Activated CD8-positive, alpha-beta T cell treated with anti-CD3 and anti-CD28 coated beads, Interleukin-2, amount 10 ng/mL, durations not matched to agents 7 days and 5 days (primary cell): ENCODE measurements at regions of chr14 and their contacts with region 1.

Region 1: GRCh38 chr14:99230208-99231151 is 41.5 kb downstream of the BCL11B start:
- DNase-seq: peak; percentile 93
- ATAC-seq: peak; percentile 60
- H3K4me3 Mint-ChIP-seq: peak overlapping the region; percentile 75
- H3K27ac Mint-ChIP-seq: peak overlapping the region; percentile 98
- H3K4me1 Mint-ChIP-seq: peaks cover 95% of the 10 kb centered on the region
- H3K27me3 Mint-ChIP-seq: no peaks in the 10 kb centered on the region

Region 2: GRCh38 chr14:99035712-99036610 is 194.5 kb before region 1 on chr14:
- CTCF ChIA-PET with region 1: no interaction called
- POLR2A ChIA-PET with region 1: no interaction called
- DNase-seq: no peak
- ATAC-seq: no peak
- H3K4me3 Mint-ChIP-seq: no peak overlapping the region
- H3K27ac Mint-ChIP-seq: no peak overlapping the region
- H3K4me1 Mint-ChIP-seq: no peaks in the 10 kb centered on the region
- H3K27me3 Mint-ChIP-seq: peaks cover 2% of the 10 kb centered on the region

Region 3: DNA sequence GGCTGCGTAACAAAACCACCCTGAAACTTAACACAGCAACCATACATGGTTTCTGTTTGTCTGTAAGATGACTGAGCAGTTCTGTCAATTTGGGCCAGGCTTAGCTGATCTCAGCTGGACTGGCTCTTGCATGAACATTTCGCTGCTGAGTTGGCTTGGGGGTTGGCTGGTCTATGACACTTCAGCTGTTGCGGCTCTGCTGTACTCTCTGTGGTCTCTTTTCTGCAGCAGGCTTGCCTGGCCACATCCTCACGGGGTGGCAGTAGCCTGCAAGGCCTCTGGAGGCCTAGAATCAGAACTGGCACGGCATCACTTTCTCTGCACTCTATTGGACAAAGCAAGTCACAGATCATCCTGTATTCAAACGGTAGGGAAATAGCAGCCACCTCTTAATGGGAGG is 174.7 kb before region 1 on chr14:
- CTCF ChIA-PET with region 1: no interaction called
- POLR2A ChIA-PET with region 1: no interaction called
- DNase-seq: peak; percentile 93
- ATAC-seq: peak; percentile 99
- H3K4me3 Mint-ChIP-seq: no peak overlapping the region
- H3K27ac Mint-ChIP-seq: peak overlapping the region; percentile 78
- H3K4me1 Mint-ChIP-seq: peaks cover 33% of the 10 kb centered on the region
- H3K27me3 Mint-ChIP-seq: peaks cover 2% of the 10 kb centered on the region

Region 4: GRCh38 chr14:99192028-99192621 is 38.4 kb before region 1 on chr14:
- CTCF ChIA-PET with region 1: interaction called, 20 read pairs
- POLR2A ChIA-PET with region 1: interaction called, 4 read pairs
- DNase-seq: peak; percentile 56
- ATAC-seq: peak; percentile 20
- H3K4me3 Mint-ChIP-seq: peak overlapping the region; percentile 88
- H3K27ac Mint-ChIP-seq: peak overlapping the region; percentile 95
- H3K4me1 Mint-ChIP-seq: peaks cover 93% of the 10 kb centered on the region
- H3K27me3 Mint-ChIP-seq: no peaks in the 10 kb centered on the region

Region 5: DNA sequence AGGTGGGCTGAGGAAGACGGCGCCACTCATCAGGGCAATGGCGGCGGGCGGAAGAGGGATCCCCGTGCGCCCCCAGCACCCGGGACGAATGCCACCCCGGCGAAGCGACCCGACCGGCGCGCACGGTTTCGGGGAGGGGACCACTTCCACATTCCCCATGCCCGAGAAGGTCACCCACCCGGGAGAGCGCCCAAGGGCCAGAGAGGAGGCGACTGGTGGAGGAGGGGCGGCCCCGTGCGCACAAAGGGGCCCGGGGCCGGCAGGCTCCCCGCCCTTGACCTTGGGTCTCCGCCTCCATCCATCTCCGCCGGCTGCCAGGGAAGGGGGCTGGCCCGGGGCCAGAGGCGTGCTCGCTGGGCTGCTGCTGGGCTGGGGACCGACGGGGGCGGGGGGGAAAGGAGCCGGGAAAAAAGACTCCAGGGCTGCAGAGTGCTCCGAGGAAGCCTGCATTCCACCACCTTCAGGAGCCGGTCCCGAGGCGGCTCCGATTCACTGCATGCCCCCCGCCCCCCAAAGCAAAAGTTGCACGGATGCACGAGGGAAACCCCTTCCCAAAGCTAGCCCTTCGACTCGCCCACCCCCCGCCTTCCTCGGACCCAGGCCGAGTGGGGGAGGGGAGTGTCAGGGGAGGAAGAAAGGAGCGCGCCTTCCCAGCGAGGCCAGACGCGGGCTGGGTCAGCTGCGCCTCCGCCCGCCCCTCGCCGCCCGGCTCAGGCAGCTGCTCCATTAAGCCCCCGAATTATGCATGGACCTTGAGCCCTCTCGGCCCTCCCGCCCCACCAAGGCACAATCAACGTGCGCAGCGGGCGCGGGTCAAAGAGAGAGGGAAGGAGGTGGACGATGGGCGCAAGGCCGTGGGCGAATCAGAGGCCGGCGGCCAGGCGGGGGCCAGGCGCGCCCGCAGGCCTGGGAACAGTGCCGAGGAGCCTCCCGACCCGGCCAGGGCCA is 15.4 kb after region 1 on chr14:
- CTCF ChIA-PET with region 1: interaction called, 21 read pairs
- POLR2A ChIA-PET with region 1: interaction called, 65 read pairs
- DNase-seq: no peak
- ATAC-seq: no peak
- H3K4me3 Mint-ChIP-seq: peak overlapping the region; percentile 73
- H3K27ac Mint-ChIP-seq: peak overlapping the region; percentile 88
- H3K4me1 Mint-ChIP-seq: peaks cover 83% of the 10 kb centered on the region
- H3K27me3 Mint-ChIP-seq: no peaks in the 10 kb centered on the region